PC-9 (cell line): ENCODE measurements at regions of chr11 and their contacts with region 1.

Region 1: GRCh38 chr11:62911137-62912130 is 9.7 kb downstream of the CHRM1 start:
- DNase-seq: no peak
- H3K4me3 ChIP-seq: no peak overlapping the region
- H3K27ac ChIP-seq: no peak overlapping the region
- H3K4me1 ChIP-seq: 0 out of 2 replicates have a peak, but pooled peaks cover 7% of the 10 kb centered on the region
- H3K27me3 ChIP-seq: peaks cover 23% of the 10 kb centered on the region
- CTCF ChIP-seq: no peak

Region 2: GRCh38 chr11:62223095-62223494 is 688.3 kb before region 1 on chr11:
- CTCF ChIA-PET with region 1: interaction called, 12 read pairs
- POLR2A ChIA-PET with region 1: no interaction called
- intact Hi-C with region 1: no loop called
- DNase-seq: no peak
- H3K4me3 ChIP-seq: no peak overlapping the region
- H3K27ac ChIP-seq: no peak overlapping the region
- H3K4me1 ChIP-seq: no peaks in the 10 kb centered on the region
- H3K27me3 ChIP-seq: peaks cover 9% of the 10 kb centered on the region
- CTCF ChIP-seq: no peak